ENCODE measurements at regions of chr2 and their contacts with region 1.

Region 1: GRCh38 chr2:217713395-217714286 is 289.2 kb downstream of the TNS1 start:
- DNase-seq: peak; percentile 46 to 90 (median 78)
- ATAC-seq: peak; percentile 90 to 96 (median 95)
- H3K4me3 ChIP-seq: no peak overlapping the region
- H3K27ac ChIP-seq: no peak overlapping the region
- H3K4me1 ChIP-seq: no peaks in the 10 kb centered on the region
- H3K27me3 ChIP-seq: no peaks in the 10 kb centered on the region
- CTCF ChIP-seq: peak; percentile 88 to 95 (median 91)

Region 2: DNA sequence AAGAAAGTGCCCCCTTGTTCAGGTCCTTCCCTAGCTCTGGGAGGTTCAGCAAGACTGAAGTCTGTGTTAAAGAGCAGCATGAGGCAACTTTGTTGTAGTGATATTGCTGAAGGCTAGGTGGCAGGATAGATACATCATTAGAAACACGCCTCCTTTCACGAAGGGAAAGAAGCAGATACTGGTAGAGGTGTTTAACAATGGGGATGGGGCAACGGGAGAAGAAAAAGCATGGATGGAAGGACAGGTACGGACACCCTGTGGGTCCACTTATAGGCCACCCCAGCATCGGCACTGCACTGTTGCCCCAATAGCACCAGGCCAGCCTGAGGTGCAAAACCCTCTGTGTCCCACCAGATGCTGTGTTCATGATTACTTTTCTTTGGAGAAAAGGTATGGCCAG is 1014.7 kb before region 1 on chr2:
- intact Hi-C with region 1: loop called in 1 of 3 experiments (anchors 10 kb)
- DNase-seq: no peak
- ATAC-seq: peak; percentile 47 to 77 (median 74)
- H3K4me3 ChIP-seq: no peak overlapping the region
- H3K27ac ChIP-seq: no peak overlapping the region
- H3K4me1 ChIP-seq: peaks cover 8 to 14% (median 13%) of the 10 kb centered on the region in 3 donors
- H3K27me3 ChIP-seq: peaks cover 0 to 13% (median 4%) of the 10 kb centered on the region in 4 donors
- CTCF ChIP-seq: peak in 3 of 4 donors; percentile 17 to 25 (median 22)

Region 3: DNA sequence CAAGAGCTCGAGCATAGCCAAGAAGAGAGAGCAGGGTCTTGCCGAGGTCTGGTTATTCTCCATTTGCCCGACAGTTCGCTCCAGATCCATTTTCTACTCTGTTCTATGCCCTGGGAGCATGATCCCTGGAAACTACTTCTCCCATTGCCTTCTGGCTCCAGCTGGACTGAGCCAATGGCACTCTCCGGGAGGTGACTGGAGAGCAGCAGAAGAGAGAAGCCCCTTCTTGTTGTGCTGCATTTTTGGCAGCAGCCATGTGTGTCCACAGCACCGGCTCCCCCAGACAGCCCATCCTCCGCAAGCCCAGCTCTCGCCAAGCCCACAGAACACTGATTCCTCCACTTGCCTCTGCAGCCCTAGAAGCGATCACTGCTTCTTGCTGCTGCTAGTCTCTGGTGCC is 56.4 kb before region 1 on chr2:
- intact Hi-C with region 1: loop called in 1 of 3 experiments (anchors 5 kb)
- DNase-seq: no peak
- ATAC-seq: no peak
- H3K4me3 ChIP-seq: no peak overlapping the region
- H3K27ac ChIP-seq: no peak overlapping the region
- H3K4me1 ChIP-seq: no peaks in the 10 kb centered on the region
- H3K27me3 ChIP-seq: no peaks in the 10 kb centered on the region
- CTCF ChIP-seq: no peak